Ovary (tissue), 10 donors: ENCODE measurements at regions of chr18 and their contacts with region 1.

Region 1: GRCh38 chr18:1884623-1885022 is 686.7 kb downstream of the METTL4 start:
- DNase-seq: no peak
- H3K4me3 ChIP-seq: no peak overlapping the region
- H3K27ac ChIP-seq: no peak overlapping the region
- H3K4me1 ChIP-seq: no peaks in the 10 kb centered on the region
- H3K27me3 ChIP-seq: no peaks in the 10 kb centered on the region
- CTCF ChIP-seq: no peak
- EP300 ChIP-seq: no peak
- POLR2A ChIP-seq: no peak

Region 2: GRCh38 chr18:1499265-1499664 is 385.4 kb before region 1 on chr18:
- intact Hi-C with region 1: loop called in 1 of 4 experiments (anchors 5 kb)
- DNase-seq: no peak
- H3K4me3 ChIP-seq: no peak overlapping the region
- H3K27ac ChIP-seq: no peak overlapping the region
- H3K4me1 ChIP-seq: no peaks in the 10 kb centered on the region
- H3K27me3 ChIP-seq: no peaks in the 10 kb centered on the region
- CTCF ChIP-seq: no peak
- EP300 ChIP-seq: no peak
- POLR2A ChIP-seq: no peak